PC-3 (cell line): ENCODE measurements at regions of chr19 and their contacts with region 1.

Region 1: GRCh38 chr19:56838909-56839651 is 1.4 kb downstream of the PEG3 start:
- DNase-seq: peak; percentile 74
- ATAC-seq: peak; percentile 57
- H3K4me3 ChIP-seq: peak overlapping the region; percentile 51; the same call in 1 of the 2 replicates
- H3K27ac ChIP-seq: no peak overlapping the region
- H3K4me1 ChIP-seq: no peaks in the 10 kb centered on the region
- H3K27me3 ChIP-seq: no peaks in the 10 kb centered on the region
- CTCF ChIP-seq: no peak

Region 2: DNA sequence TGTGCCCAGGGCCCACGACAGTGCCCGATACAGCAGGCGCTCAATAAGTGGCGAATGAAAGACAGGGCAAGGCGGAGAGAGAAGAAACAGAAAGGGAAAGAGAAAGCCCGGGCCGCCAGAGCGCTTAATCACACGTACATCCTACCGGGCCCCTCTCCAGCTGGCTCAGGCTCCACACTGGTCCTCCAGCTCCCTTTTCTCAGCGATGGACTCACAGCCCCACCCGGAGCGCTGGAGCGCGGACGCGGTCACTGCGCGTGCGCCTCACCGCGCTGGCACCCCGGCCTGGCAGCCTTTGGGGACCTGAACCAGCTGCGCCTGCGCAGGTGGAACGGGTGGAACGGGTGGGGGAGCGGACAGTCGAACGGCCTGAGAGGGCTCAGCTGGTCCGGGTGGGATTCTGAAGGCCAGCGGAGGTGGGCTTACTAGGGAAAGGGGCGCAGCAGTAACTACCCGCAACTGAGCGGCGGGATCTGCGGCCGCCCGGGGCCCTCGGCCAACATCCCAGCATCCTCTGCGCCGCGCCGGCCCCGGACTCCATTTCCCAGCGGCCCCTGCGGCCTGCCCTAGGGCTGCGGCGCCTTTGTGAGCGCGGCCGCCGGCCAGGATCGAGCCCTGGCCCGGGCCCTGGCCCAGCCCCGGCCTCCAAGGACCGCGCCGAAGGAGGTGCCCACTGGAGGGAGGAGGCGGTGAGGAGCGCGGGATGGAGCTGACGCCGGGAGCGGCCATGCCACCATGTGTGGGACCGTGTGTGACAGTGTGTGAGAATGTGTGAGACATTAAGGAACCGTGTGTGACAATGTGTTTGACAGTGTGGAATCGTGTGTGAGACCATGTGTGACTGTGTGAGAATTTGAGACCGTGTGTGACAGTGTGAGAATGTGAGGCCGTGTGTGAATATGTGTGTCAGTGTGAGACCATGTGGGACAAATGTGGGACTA is 435.0 kb before region 1 on chr19 and contains the start of gene ZNF583:
- CTCF ChIA-PET with region 1: no interaction called
- POLR2A ChIA-PET with region 1: no interaction called
- intact Hi-C with region 1: no loop called
- DNase-seq: no peak
- ATAC-seq: no peak; the same call in 1 of the 2 replicates
- H3K4me3 ChIP-seq: no peak within 1 kb of the TSS
- H3K27ac ChIP-seq: no peak within 1 kb of the TSS
- H3K4me1 ChIP-seq: no peaks in the 10 kb centered on the region
- H3K27me3 ChIP-seq: no peaks in the 10 kb centered on the region
- CTCF ChIP-seq: no peak
- total RNA-seq, gene ZNF583: 0.11 TPM in 1 of 2 replicates, not detected in the other

Region 3: DNA sequence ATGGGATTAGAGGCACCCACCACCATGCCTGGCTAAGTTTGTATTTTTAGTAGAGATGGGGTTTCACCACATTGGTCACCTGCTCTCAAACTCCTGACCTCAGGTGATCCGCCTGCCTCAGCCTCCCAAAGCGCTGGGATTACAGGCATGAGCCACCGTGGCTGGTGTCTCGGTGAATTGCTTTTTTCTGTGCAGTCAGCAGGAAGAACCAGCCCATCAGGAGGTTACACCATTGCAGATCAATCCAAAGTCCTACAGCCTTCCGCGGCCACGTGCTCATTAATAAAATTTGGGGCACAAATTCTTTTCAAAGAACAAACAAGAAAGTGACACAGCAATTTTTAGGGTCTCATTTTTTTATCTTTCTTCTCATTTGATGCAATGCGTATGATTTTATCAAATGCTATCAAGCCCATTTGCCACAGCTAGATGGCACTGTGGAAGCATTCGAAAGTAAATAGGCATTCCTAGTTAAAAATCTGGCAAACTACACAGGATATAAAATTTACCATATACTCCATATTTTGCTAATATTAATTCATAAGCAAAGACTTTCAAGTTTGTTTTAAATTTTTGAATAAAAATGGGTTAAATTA is 113.2 kb before region 1 on chr19:
- CTCF ChIA-PET with region 1: interaction called, 4 read pairs
- POLR2A ChIA-PET with region 1: no interaction called
- intact Hi-C with region 1: loop called (anchors 10 kb)
- DNase-seq: peak; percentile 44
- ATAC-seq: no peak
- H3K4me3 ChIP-seq: no peak overlapping the region
- H3K27ac ChIP-seq: no peak overlapping the region
- H3K4me1 ChIP-seq: no peaks in the 10 kb centered on the region
- H3K27me3 ChIP-seq: no peaks in the 10 kb centered on the region
- CTCF ChIP-seq: peak; percentile 63

Region 4: DNA sequence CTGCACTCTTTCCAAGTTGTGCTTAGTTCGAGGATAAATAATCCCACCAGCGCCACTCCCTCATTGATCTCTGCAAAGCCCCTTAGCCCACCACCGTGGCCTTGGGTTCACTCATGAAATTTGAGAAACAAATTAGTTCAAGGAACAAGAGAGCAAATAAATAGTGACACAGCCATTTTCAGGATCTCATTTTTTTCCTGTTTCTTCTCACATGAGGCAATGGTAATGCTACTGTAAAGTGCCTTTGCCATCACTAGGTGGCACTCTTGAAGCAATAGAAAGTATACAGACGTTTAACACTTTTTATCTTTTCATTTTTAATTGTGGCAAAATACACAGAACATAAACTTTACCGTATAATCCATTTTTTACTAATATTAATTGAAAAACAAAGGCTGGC is 90.7 kb before region 1 on chr19:
- CTCF ChIA-PET with region 1: no interaction called
- POLR2A ChIA-PET with region 1: no interaction called
- intact Hi-C with region 1: loop called (anchors 5 kb)
- DNase-seq: peak; percentile 50
- ATAC-seq: no peak
- H3K4me3 ChIP-seq: no peak overlapping the region
- H3K27ac ChIP-seq: no peak overlapping the region
- H3K4me1 ChIP-seq: no peaks in the 10 kb centered on the region
- H3K27me3 ChIP-seq: no peaks in the 10 kb centered on the region
- CTCF ChIP-seq: peak; percentile 63

Region 5: DNA sequence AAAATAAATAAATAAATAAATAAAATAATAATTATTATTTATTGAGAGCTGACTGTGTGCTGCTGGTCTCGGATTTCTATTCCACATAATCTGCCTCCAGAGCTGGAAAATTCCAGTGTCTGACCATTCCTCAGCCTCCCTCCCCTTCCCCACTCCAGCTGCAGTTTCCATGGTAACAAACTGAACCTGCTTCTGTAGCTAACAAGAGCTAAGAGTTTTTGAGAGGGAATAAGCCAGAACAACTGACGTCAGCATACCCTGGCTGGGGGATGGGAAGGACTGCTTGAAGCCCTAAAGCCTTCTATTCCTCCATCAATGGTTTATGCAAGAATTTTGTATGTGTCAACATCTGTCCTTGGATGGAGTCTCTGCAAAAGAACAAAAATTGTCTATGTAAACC is 27.5 kb after region 1 on chr19:
- CTCF ChIA-PET with region 1: no interaction called
- POLR2A ChIA-PET with region 1: no interaction called
- intact Hi-C with region 1: no loop called
- DNase-seq: no peak
- ATAC-seq: no peak
- H3K4me3 ChIP-seq: no peak overlapping the region
- H3K27ac ChIP-seq: no peak overlapping the region
- H3K4me1 ChIP-seq: no peaks in the 10 kb centered on the region
- H3K27me3 ChIP-seq: no peaks in the 10 kb centered on the region
- CTCF ChIP-seq: no peak